Activated naive CD8-positive, alpha-beta T cell treated with anti-CD3 and anti-CD28 coated beads, Interleukin-2, amount 10 ng/mL, durations not matched to agents 7 days and 5 days (primary cell): ENCODE measurements at regions of chr3 and their contacts with region 1.

Region 1: GRCh38 chr3:153161138-153161713 is 800 bp upstream of the RAP2B start:
- DNase-seq: peak; percentile 82
- ATAC-seq: peak; percentile 85
- H3K4me3 Mint-ChIP-seq: peak overlapping the region; percentile 96
- H3K27ac Mint-ChIP-seq: peak overlapping the region; percentile 99
- H3K4me1 Mint-ChIP-seq: peaks cover 25% of the 10 kb centered on the region
- H3K27me3 Mint-ChIP-seq: no peaks in the 10 kb centered on the region

Region 2: GRCh38 chr3:153173758-153174516 is 12.7 kb after region 1 on chr3:
- POLR2A ChIA-PET with region 1: interaction called, 15 read pairs
- DNase-seq: no peak
- ATAC-seq: no peak
- H3K4me3 Mint-ChIP-seq: no peak overlapping the region
- H3K27ac Mint-ChIP-seq: peak overlapping the region; percentile 40
- H3K4me1 Mint-ChIP-seq: no peaks in the 10 kb centered on the region
- H3K27me3 Mint-ChIP-seq: no peaks in the 10 kb centered on the region

Region 3: GRCh38 chr3:153209596-153209995 is 48.4 kb after region 1 on chr3:
- POLR2A ChIA-PET with region 1: no interaction called
- DNase-seq: no peak
- ATAC-seq: no peak
- H3K4me3 Mint-ChIP-seq: no peak overlapping the region
- H3K27ac Mint-ChIP-seq: no peak overlapping the region
- H3K4me1 Mint-ChIP-seq: peaks cover 6% of the 10 kb centered on the region
- H3K27me3 Mint-ChIP-seq: no peaks in the 10 kb centered on the region

Region 4: GRCh38 chr3:153221748-153222162 is 60.5 kb after region 1 on chr3:
- POLR2A ChIA-PET with region 1: interaction called, 60 read pairs
- DNase-seq: peak; percentile 56
- ATAC-seq: peak; percentile 99
- H3K4me3 Mint-ChIP-seq: peak overlapping the region; percentile 80
- H3K27ac Mint-ChIP-seq: peak overlapping the region; percentile 97
- H3K4me1 Mint-ChIP-seq: peaks cover 36% of the 10 kb centered on the region
- H3K27me3 Mint-ChIP-seq: no peaks in the 10 kb centered on the region